Dendritic cell treated with granulocyte-macrophage colony-stimulating factor and Interleukin-4, amounts not matched to agents 40 ng/mL and 50 ng/mL, for 4 days (primary cell): ENCODE measurements at regions of chr2 and their contacts with region 1.

Region 1: GRCh38 chr2:82857967-82858366 is 1601.1 kb downstream of the SUCLG1 start:
- H3K4me3 Mint-ChIP-seq: no peak overlapping the region
- H3K27ac Mint-ChIP-seq: no peak overlapping the region
- H3K4me1 Mint-ChIP-seq: no peaks in the 10 kb centered on the region
- H3K27me3 Mint-ChIP-seq: peaks cover 2% of the 10 kb centered on the region

Region 2: GRCh38 chr2:82198809-82199492 is 659.0 kb before region 1 on chr2:
- intact Hi-C with region 1: no loop called
- H3K4me3 Mint-ChIP-seq: no peak overlapping the region
- H3K27ac Mint-ChIP-seq: no peak overlapping the region
- H3K4me1 Mint-ChIP-seq: no peaks in the 10 kb centered on the region
- H3K27me3 Mint-ChIP-seq: no peaks in the 10 kb centered on the region

Region 3: DNA sequence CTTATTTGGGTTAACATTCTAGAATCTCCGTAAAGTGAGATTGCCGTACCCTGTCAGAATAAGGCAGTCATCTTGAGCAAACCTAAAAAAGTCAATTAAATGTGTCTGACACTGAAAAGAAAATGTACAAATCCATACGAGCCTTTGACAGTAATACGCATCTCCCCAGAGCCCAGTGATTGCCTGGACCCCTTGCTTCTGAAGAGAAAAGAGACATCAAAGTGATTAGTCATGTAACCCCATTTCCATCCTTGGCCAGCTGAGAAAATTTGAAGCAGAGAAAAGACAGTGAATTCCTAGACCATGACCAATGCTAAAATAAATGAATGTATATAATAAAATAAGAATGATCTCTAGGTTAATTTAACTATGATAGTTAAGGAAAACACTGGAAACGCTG is 101.8 kb after region 1 on chr2:
- intact Hi-C with region 1: no loop called
- H3K4me3 Mint-ChIP-seq: no peak overlapping the region
- H3K27ac Mint-ChIP-seq: no peak overlapping the region
- H3K4me1 Mint-ChIP-seq: no peaks in the 10 kb centered on the region
- H3K27me3 Mint-ChIP-seq: no peaks in the 10 kb centered on the region

Region 4: GRCh38 chr2:83261591-83262136 is 403.7 kb after region 1 on chr2:
- intact Hi-C with region 1: no loop called
- H3K4me3 Mint-ChIP-seq: no peak overlapping the region
- H3K27ac Mint-ChIP-seq: no peak overlapping the region
- H3K4me1 Mint-ChIP-seq: no peaks in the 10 kb centered on the region
- H3K27me3 Mint-ChIP-seq: no peaks in the 10 kb centered on the region

Region 5: GRCh38 chr2:83705146-83705545 is 847.2 kb after region 1 on chr2:
- intact Hi-C with region 1: loop called (anchors 5 kb)
- H3K4me3 Mint-ChIP-seq: no peak overlapping the region
- H3K27ac Mint-ChIP-seq: no peak overlapping the region
- H3K4me1 Mint-ChIP-seq: no peaks in the 10 kb centered on the region
- H3K27me3 Mint-ChIP-seq: no peaks in the 10 kb centered on the region